Mucosa of descending colon (tissue), 3 donors: ENCODE measurements at regions of chr10 and their contacts with region 1.

Region 1: DNA sequence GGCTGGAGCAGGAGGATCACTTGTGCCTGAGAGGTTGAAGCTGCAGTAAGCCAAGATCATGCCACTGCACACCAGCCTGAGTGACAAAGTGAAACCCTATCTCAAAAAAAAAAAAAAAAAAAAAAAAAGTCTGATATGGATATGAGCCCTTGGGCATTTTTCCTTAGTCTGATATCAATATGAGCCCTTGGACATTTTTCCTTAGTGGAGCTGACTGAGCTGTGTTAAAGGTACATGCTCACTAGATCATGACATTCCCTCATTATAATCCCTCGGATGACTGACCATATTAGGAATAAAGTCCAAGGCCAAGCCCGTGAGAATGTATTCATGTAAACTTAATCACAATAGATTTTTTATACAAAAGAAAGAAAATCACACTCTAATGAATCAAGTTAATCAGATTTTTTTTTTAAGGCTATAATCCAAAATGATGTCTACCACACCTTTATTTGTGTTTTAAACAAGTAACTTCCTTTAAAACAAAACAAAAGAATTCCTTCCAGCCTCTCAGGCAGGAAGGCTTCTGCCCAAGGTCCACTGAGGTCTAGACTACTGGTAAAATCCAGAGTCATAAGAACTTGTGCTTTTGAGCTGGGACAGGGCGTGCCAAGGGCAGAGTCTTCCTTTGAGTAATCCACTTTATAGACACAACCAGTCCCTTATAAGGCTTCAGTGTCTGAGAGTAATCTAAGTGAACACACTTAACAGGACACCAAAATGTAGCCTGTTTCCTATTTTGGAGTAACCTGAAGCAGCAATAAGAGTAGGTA is 5.5 kb downstream of the PPA1 start:
- DNase-seq: peak; percentile 71 to 80 (median 72)
- ATAC-seq: peak; percentile 89
- H3K4me3 ChIP-seq: no peak overlapping the region
- H3K4me1 ChIP-seq: peaks cover 36% of the 10 kb centered on the region
- CTCF ChIP-seq: no peak

Region 2: DNA sequence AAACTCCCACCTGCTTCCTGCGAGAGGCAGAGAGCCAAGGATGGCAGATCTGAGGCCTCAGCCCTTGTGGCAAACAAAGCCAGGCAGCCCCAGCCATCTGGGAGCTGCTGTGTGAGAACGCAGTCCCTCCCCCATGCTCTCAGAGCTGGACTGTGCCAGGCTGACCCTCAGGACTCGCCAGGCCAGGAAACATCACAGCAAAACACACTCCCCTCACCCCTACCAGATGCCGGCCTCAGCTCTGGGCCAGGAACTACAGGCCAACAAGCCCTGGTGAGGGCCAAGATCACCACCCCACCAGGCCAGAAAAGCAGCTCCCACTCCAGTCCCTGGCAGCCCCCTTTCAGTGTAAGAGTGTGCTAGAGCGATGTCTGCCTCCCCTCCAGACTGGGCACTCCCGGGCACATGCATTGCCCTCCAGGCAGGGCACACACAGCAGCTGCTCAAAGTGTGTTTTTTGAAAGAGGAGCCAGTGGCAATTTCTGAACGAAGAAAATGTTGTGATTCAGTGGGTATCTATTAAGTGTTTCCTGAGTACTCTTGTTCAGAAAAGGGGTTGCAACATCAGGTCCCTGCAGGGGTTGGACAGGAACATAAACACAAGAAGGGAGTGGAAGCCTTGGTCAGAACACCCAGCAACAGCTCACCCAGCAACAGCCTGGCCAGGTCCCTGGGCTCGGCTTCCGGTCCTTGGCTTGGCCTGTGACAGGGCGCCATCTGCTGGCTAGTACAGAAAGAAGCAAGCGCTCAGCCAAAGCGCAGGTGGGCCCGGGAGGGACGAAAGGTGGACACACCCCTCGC is 136.4 kb after region 1 on chr10:
- intact Hi-C with region 1: loop called (anchors 5 to 10 kb)
- DNase-seq: peak; percentile 89 to 91 (median 89)
- ATAC-seq: peak; percentile 99
- H3K4me3 ChIP-seq: no peak overlapping the region
- H3K4me1 ChIP-seq: peaks cover 7% of the 10 kb centered on the region
- CTCF ChIP-seq: peak; percentile 61